ENCODE measurements at regions of chr3 and their contacts with region 1.

Region 1: GRCh38 chr3:101195951-101196713 is 124.2 kb downstream of the IMPG2 start:
- DNase-seq: no peak

Region 2: GRCh38 chr3:100893590-100893989 is 302.5 kb before region 1 on chr3:
- intact Hi-C with region 1: loop called (anchors 5 kb)
- DNase-seq: no peak

Region 3: DNA sequence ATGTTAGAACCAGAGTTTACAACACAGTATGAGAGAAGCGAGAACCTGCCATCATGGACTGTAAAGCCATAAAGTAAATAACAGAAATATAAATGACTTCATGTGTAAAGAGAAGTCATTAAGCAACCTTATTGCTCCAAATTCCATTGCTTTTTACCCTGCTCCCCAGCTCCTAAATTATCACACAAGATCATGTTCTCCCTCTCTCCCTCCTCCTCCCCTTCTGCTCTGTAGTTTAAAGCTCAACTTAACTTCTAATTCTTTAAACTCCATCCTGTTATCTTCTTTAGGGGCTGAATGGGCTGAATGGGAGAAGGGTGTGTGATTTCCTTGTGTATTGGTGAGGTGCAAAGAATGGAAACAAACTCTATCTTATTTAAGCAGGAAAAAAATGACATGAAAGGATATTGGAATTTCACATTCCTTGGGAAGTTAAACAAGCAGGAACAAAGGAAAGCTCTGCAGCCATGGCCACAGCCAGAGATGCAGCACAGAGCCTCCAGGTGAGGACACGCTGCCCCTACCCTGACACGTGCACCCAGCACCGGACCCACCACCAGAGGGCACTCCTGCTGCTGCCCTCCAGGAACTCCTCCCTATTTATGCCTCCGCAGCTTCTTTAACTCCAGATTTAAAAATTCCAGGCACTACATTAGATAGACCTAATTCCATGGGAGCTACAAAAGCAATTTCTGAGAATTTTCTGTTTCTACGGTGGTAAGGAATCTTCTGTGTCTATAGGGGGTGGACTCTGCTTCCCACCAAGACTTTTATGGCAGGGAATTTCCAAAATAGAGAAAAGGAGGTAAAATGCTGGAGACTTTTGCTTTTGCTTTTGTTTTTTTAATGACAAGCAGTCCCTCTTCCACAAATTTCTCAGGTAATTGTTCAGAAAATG is 126.0 kb before region 1 on chr3:
- intact Hi-C with region 1: loop called (anchors 2 kb)
- DNase-seq: no peak

Measured in cardiac septum (tissue), 1 donor.